Natural killer cell (primary cell): ENCODE measurements at regions of chr2 and their contacts with region 1.

Region 1: DNA sequence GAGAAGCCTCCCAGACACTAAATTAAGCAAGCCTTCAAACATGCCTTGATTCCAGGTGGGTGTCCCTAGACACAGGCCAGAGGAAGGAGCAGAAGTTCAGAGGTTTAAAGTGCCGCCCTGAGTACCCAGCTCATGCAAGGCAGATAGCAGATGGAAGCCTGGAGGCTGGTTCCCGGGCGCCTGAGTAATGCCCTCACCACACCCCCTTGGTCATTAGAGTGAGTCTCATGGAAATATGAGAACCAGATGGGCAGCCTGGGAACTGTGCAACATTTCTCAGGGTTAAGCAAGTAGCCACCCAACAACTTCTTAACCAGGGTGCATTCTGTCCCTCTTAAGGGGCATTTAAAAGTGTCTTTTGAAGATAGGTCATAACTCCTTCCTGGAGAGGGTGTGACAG is 44.1 kb downstream of the TGFA start:
- DNase-seq: no peak
- ATAC-seq: no peak
- H3K4me3 ChIP-seq: no peak overlapping the region
- H3K4me3 Mint-ChIP-seq: no peak overlapping the region
- H3K27ac ChIP-seq: no peak overlapping the region
- H3K27ac Mint-ChIP-seq: no peak overlapping the region
- H3K4me1 ChIP-seq: peaks cover 18% of the 10 kb centered on the region
- H3K4me1 Mint-ChIP-seq: peaks cover 31 to 57% of the 10 kb centered on the region in 2 donors
- H3K27me3 ChIP-seq: no peaks in the 10 kb centered on the region
- H3K27me3 Mint-ChIP-seq: no peaks in the 10 kb centered on the region
- CTCF ChIP-seq: no peak

Region 2: GRCh38 chr2:70553584-70554337 is 44.2 kb after region 1 on chr2 and contains the start of gene TGFA:
- intact Hi-C with region 1: loop called (anchors 5 kb)
- DNase-seq: peak; percentile 70 to 79
- ATAC-seq: peak; percentile 79 to 87 (median 82)
- H3K4me3 ChIP-seq: peak within 1 kb of the TSS; percentile 62
- H3K4me3 Mint-ChIP-seq: peak within 1 kb of the TSS; percentile 95
- H3K27ac ChIP-seq: peak within 1 kb of the TSS; percentile 46
- H3K27ac Mint-ChIP-seq: peak within 1 kb of the TSS; percentile 74 to 96
- H3K4me1 ChIP-seq: peaks cover 26% of the 10 kb centered on the region
- H3K4me1 Mint-ChIP-seq: peaks cover 35 to 42% of the 10 kb centered on the region in 2 donors
- H3K27me3 ChIP-seq: peaks cover 5% of the 10 kb centered on the region
- H3K27me3 Mint-ChIP-seq: peaks cover 8 to 15% of the 10 kb centered on the region in 2 donors
- CTCF ChIP-seq: peak; percentile 89
- total RNA-seq, gene TGFA: 5.0 to 13.3 (median 8.6) TPM